Activated CD8-positive, alpha-beta T cell treated with anti-CD3 and anti-CD28 coated beads for 36 hours (primary cell): ENCODE measurements at regions of chr10 and their contacts with region 1.

Region 1: GRCh38 chr10:17216217-17216900 is 11.7 kb upstream of the VIM start:
- DNase-seq: peak; percentile 54
- ATAC-seq: peak; percentile 96
- H3K4me3 Mint-ChIP-seq: peak overlapping the region; percentile 32
- H3K27ac Mint-ChIP-seq: peak overlapping the region; percentile 95
- H3K4me1 Mint-ChIP-seq: peaks cover 55% of the 10 kb centered on the region
- H3K27me3 Mint-ChIP-seq: no peaks in the 10 kb centered on the region
- CTCF ChIP-seq: no peak

Region 2: GRCh38 chr10:16470747-16471146 is 745.6 kb before region 1 on chr10:
- CTCF ChIA-PET with region 1: no interaction called
- POLR2A ChIA-PET with region 1: no interaction called
- intact Hi-C with region 1: no loop called
- DNase-seq: peak; percentile 64
- ATAC-seq: peak; percentile 45
- H3K4me3 Mint-ChIP-seq: no peak overlapping the region
- H3K27ac Mint-ChIP-seq: peak overlapping the region; percentile 80
- H3K4me1 Mint-ChIP-seq: peaks cover 29% of the 10 kb centered on the region
- H3K27me3 Mint-ChIP-seq: no peaks in the 10 kb centered on the region
- CTCF ChIP-seq: no peak

Region 3: DNA sequence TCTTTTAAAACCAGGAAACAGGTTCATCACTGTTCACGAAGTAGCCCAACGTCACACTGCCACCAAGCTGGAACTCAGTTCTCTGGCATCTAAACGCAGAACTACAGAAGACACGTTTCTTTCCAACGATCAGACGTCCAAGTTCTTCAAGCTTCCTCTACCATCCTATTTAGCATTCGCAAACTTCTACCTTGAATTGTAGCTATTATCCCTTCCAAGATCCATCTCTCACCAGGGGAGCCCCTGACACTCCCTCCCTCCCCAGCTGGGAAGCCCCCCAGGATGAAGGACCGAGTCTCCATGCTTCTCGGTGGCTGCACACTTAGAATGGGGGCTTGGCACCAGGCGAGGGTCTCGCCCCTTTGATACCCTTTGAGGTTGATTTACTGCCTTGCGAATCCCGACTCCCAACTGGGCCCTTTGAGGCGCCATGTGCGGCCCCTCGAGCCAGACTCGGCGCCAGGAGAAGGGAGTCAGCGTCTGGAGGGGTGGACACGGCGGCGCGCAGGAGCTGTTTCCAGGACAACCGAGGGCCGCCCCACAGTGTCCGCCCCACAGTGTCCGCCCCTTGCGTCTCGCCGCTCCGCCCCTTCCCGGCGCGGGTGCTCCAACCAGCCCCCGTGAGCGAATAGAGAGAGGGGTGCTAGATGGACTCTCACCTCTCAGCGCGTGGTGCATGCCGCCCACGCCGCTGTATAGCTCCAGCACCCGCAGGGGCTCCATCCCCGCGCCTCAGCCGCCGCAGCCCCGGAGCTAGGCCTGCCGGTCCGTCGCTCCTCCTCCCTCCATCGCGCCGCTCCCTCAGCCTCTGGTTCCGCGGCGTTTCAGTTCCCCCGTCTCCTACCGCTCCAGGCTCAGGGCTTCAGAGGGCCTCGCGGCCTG is 15.2 kb before region 1 on chr10 and contains the start of gene TRDMT1:
- CTCF ChIA-PET with region 1: interaction called, 7 read pairs
- POLR2A ChIA-PET with region 1: interaction called, 13 read pairs
- intact Hi-C with region 1: no loop called
- DNase-seq: peak; percentile 85
- ATAC-seq: peak; percentile 92
- H3K4me3 Mint-ChIP-seq: peak within 1 kb of the TSS; percentile 94
- H3K27ac Mint-ChIP-seq: peak within 1 kb of the TSS; percentile 95
- H3K4me1 Mint-ChIP-seq: peaks cover 40% of the 10 kb centered on the region
- H3K27me3 Mint-ChIP-seq: no peaks in the 10 kb centered on the region
- CTCF ChIP-seq: no peak
- total RNA-seq, gene TRDMT1: 4.4 to 4.5 TPM

Region 4: GRCh38 chr10:17290226-17290625 is 73.9 kb after region 1 on chr10:
- CTCF ChIA-PET with region 1: no interaction called
- POLR2A ChIA-PET with region 1: no interaction called
- intact Hi-C with region 1: no loop called
- DNase-seq: peak; percentile 35
- ATAC-seq: peak; percentile 97
- H3K4me3 Mint-ChIP-seq: no peak overlapping the region
- H3K27ac Mint-ChIP-seq: peak overlapping the region; percentile 82
- H3K4me1 Mint-ChIP-seq: peaks cover 10% of the 10 kb centered on the region
- H3K27me3 Mint-ChIP-seq: peaks cover 16% of the 10 kb centered on the region
- CTCF ChIP-seq: peak; percentile 39